ENCODE measurements at regions of chr16 and their contacts with region 1.

Region 1: GRCh38 chr16:27367461-27368357 is 34.3 kb upstream of the IL21R start:
- DNase-seq: peak; percentile 90
- ATAC-seq: peak; percentile 84 to 85

Region 2: GRCh38 chr16:27179500-27180072 is 188.1 kb before region 1 on chr16:
- intact Hi-C with region 1: loop called (anchors 1 to 10 kb)
- DNase-seq: peak; percentile 89
- ATAC-seq: peak; percentile 95 to 97

Region 3: DNA sequence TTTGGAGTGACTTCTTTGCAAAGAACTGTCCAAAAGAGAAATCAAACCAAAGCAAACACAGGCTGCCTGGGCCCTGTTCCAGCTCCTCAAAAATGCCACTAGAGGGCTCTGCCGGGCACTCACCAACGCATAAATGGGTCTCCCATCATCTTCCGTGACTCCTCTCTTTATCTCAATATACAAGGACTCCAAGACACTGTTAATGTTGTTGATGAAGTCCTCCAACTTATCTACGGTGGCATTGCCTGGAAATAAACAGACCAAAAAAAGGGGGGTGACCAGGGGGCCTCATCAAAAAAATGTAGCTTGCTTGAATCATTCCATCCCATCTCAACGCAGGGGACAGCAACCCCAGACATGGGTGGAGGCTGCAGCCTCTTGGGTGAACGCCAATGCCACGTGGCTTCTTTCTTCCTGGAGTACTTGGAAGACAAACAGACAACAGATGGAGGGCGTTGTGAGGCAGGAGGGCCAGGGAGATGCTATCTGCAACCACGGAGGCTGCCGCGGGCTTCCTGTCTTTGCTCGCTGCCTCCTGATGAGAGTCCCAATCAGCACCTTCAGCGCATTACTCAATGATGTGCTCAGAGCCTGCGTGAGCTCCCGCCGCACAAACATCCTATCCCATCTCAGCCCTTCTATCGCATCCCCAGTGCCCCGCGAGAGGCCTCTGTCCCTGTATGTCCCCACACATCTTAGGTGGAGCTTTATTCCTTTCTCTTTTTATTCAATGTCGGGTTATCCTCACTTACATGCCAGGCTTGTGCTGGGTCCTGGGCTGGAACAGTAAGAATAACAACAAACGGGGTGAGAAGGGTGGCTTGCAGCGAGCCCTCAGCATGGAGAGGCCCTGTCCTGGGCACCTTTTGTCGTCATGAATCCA is 132.4 kb before region 1 on chr16:
- intact Hi-C with region 1: loop called in 1 of 2 experiments (anchors 5 kb)
- DNase-seq: peak; percentile 94
- ATAC-seq: peak; percentile 66 to 68

Region 4: DNA sequence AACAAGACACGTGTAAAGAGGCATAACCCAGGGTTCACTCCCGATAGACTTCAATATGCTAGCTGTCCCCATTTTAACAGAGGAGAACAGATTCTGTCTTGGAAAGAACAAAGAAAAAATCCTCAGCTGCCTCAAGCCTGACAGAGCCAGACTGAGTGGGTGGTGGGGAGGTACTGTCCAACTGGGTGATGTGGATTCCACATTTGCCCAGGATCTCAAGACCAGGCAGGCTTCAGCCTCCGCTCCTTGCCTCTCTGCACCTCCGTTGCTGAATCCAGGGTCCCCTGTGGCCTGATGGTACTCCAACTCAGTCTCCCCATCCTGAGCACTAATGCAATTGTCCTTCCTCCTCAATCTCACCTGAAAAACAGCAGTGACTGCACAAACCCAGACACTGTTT is 532.0 kb after region 1 on chr16:
- intact Hi-C with region 1: no loop called
- DNase-seq: no peak
- ATAC-seq: no peak